SK-N-SH (cell line): ENCODE measurements at regions of chr11 and their contacts with region 1.

Region 1: GRCh38 chr11:107549253-107549953 is 16.1 kb downstream of the ALKBH8 start:
- DNase-seq: peak; percentile 24
- H3K4me3 ChIP-seq: no peak overlapping the region; a peak in 1 of 4 replicates
- H3K27ac ChIP-seq: no peak overlapping the region
- H3K4me1 ChIP-seq: peaks cover 0 to 6% of the 10 kb centered on the region in 2 experiments; a peak in 2 of 4 replicates
- H3K27me3 ChIP-seq: no peaks in the 10 kb centered on the region
- CTCF ChIP-seq: peak; percentile 94
- EP300 ChIP-seq: no peak
- RAD21 ChIP-seq: peak; percentile 83

Region 2: DNA sequence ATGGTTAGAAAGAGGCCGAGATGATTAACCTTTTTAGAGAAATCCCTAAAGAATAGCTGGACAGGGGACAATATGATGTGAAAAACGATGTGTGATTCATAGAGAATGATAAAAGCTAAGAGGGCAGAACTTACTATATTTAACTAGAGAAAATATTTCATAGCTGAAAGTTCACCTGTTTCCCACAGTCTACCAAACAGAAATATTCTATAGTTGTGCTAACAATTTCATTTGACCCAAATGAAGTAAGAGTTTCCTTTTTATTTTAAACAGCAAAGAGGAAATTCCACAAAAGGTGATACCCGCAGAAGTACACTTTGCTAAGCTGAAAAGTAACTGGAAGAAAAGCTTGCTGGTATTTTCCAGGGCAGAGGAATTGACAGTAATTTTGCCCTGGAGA is 10.6 kb before region 1 on chr11:
- CTCF ChIA-PET with region 1: interaction called, 38 read pairs
- POLR2A ChIA-PET with region 1: no interaction called
- DNase-seq: no peak
- H3K4me3 ChIP-seq: no peak overlapping the region
- H3K27ac ChIP-seq: no peak overlapping the region
- H3K4me1 ChIP-seq: no peaks in the 10 kb centered on the region
- H3K27me3 ChIP-seq: no peaks in the 10 kb centered on the region
- CTCF ChIP-seq: no peak
- EP300 ChIP-seq: no peak
- RAD21 ChIP-seq: no peak

Region 3: GRCh38 chr11:107565219-107565937 is 16.0 kb after region 1 on chr11 and contains the start of gene ALKBH8:
- CTCF ChIA-PET with region 1: interaction called, 110 read pairs
- POLR2A ChIA-PET with region 1: no interaction called
- DNase-seq: peak; percentile 73
- H3K4me3 ChIP-seq: peak within 1 kb of the TSS; percentile 86 to 95
- H3K27ac ChIP-seq: peak within 1 kb of the TSS; percentile 73 to 87
- H3K4me1 ChIP-seq: peaks cover 31 to 46% of the 10 kb centered on the region in 2 experiments
- H3K27me3 ChIP-seq: no peaks in the 10 kb centered on the region
- CTCF ChIP-seq: no peak
- EP300 ChIP-seq: no peak
- RAD21 ChIP-seq: no peak
- polyA plus RNA-seq, gene ALKBH8: 2.4 and 3.5 TPM in 2 replicates

Region 4: DNA sequence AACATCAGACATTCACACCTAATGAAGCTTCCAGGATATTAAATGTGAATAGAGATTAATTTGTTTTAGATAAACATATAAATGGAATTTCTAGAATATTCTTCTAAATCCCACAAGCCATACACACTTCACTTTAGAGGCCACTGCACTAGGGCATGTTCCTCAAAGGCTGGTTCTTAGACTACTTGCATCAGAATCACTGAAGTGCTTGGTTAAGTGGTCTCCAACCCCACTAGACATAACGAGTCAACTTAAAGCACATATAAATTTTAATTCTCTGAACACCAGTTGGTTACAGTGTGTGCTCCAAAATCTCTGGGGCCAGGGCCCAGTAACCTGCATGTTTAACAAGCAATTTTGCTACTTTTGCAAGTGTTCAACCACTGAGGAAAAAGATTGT is 24.0 kb after region 1 on chr11:
- CTCF ChIA-PET with region 1: interaction called, 10 read pairs
- POLR2A ChIA-PET with region 1: no interaction called
- DNase-seq: no peak
- H3K4me3 ChIP-seq: no peak overlapping the region
- H3K27ac ChIP-seq: no peak overlapping the region
- H3K4me1 ChIP-seq: peaks cover 0 to under 1% of the 10 kb centered on the region in 2 experiments; a peak in 1 of 4 replicates
- H3K27me3 ChIP-seq: no peaks in the 10 kb centered on the region
- CTCF ChIP-seq: no peak
- EP300 ChIP-seq: no peak
- RAD21 ChIP-seq: no peak

Region 5: GRCh38 chr11:107689317-107690202 is 140.2 kb after region 1 on chr11:
- CTCF ChIA-PET with region 1: interaction called, 61 read pairs
- POLR2A ChIA-PET with region 1: no interaction called
- DNase-seq: peak; percentile 62
- H3K4me3 ChIP-seq: no peak overlapping the region; a peak in 1 of 4 replicates
- H3K27ac ChIP-seq: no peak overlapping the region
- H3K4me1 ChIP-seq: peaks cover 0 to 13% of the 10 kb centered on the region in 2 experiments; a peak in 3 of 4 replicates
- H3K27me3 ChIP-seq: no peaks in the 10 kb centered on the region
- CTCF ChIP-seq: peak; percentile 77
- EP300 ChIP-seq: no peak
- RAD21 ChIP-seq: peak; percentile 93

Region 6: DNA sequence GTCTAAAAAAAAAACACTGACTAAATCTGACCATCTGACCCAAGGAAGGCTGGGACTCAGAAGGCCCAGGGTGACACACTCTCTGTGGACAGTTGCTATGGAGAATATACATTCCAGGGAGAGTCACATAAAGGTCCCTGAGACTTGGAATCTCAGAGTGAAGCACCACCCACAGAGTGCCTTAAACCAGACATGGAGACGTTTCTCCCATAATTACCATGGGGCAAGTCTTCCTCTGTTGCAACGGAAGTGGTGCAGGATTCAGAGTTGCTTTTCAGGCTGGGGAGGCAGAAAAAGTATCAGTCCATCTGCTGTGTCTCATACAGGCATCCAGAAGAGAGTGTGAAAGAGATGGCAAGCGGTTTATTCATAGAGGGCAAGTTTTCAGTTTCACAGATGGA is 221.1 kb after region 1 on chr11:
- CTCF ChIA-PET with region 1: interaction called, 11 read pairs
- POLR2A ChIA-PET with region 1: no interaction called
- DNase-seq: no peak
- H3K4me3 ChIP-seq: no peak overlapping the region
- H3K27ac ChIP-seq: peak overlapping the region in 1 of 2 experiments; percentile 70; a peak in 2 of 4 replicates
- H3K4me1 ChIP-seq: 0 out of 4 replicates have a peak, but pooled peaks cover 0 to 5% of the 10 kb centered on the region in 2 experiments
- H3K27me3 ChIP-seq: no peaks in the 10 kb centered on the region
- CTCF ChIP-seq: no peak
- EP300 ChIP-seq: no peak
- RAD21 ChIP-seq: no peak